GM12878 (cell line): ENCODE measurements at regions of chr6 and their contacts with region 1.

Region 1: DNA sequence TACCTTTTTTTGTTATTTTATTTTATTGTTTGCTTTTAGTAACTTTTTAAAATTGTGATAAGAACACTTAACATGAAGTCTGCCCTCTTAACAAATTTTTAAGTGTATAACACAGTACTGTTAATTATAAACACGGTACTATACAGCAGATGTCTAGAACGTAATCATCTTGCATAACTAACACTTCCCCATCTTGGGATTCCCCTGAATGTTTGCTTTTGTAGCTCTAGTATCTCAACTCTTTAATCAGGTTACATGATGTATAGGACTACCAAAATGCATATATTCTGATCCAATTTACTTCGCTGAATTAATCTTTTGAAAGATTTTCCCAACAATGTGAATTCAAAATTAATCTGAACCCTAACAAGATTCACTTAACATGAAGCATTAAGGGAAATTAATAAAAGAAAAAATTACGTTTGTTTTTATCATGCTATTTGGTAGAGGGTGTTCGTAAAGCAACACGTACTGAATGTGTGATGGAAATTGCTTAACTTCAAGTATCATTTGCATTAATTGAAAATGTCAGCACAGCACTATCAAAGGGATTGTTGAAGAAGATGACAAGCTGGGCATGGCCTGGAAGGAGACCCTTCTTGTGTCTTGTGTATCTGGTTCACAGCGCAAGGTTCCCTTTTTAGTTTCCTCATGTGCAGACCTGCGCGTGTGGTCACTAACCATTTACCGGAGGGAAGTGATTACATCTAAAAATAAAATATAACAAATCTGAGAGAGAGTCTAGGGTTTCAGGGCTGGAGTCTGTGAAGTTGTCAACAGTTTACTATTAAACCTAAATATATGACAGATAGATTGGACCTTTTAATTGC is 15.2 kb downstream of the COL19A1 start:
- DNase-seq: peak; percentile 85
- ATAC-seq: peak; percentile 88
- H3K4me3 ChIP-seq: peak overlapping the region; percentile 48
- H3K27ac ChIP-seq: peak overlapping the region; percentile 96
- H3K4me1 ChIP-seq: peaks cover 24% of the 10 kb centered on the region
- H3K27me3 ChIP-seq: no peaks in the 10 kb centered on the region
- CTCF ChIP-seq: no peak
- EP300 ChIP-seq: peak; percentile 71 to 91; a peak in 3 of 4 replicates
- POLR2A ChIP-seq: peak; percentile 59
- RAD21 ChIP-seq: peak; percentile 20; the same call in 1 of the 2 replicates

Region 2: GRCh38 chr6:69894578-69895347 is 13.2 kb after region 1 on chr6:
- CTCF ChIA-PET with region 1: interaction called, 17 read pairs
- POLR2A ChIA-PET with region 1: interaction called, 23 read pairs
- RAD21 ChIA-PET with region 1: interaction called, 41 read pairs
- SMC1A ChIA-PET with region 1: interaction called, 27 read pairs
- in situ Hi-C with region 1: no loop called
- intact Hi-C with region 1: no loop called
- DNase-seq: peak; percentile 62
- ATAC-seq: peak; percentile 91
- H3K4me3 ChIP-seq: 0 out of 2 replicates have a peak overlapping the region, but pooled peaks have one; percentile 25
- H3K27ac ChIP-seq: peak overlapping the region; percentile 86
- H3K4me1 ChIP-seq: peaks cover 11% of the 10 kb centered on the region; the same call in 1 of the 2 replicates
- H3K27me3 ChIP-seq: no peaks in the 10 kb centered on the region
- CTCF ChIP-seq: no peak
- EP300 ChIP-seq: no peak
- POLR2A ChIP-seq: peak; percentile 41; the same call in 1 of the 2 replicates
- RAD21 ChIP-seq: no peak

Region 3: DNA sequence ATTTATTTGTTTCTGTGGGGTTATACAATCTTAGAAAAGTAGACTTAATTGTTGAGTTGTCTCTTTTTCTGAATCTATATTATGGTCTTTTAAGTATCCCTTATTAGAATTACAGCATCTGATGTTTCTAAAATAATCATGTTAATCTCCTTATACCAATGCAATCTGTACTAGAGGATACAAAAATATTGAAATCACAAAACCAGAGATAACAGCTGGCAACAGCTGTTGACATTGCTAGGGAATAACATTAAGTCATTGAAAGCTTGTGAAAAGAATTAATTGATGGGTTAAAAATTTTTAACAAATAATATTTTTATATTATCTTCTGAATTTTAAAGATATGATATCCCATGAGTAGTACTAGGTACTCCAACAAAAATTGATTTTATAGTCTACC is 147.4 kb after region 1 on chr6:
- CTCF ChIA-PET with region 1: no interaction called
- POLR2A ChIA-PET with region 1: no interaction called
- RAD21 ChIA-PET with region 1: no interaction called
- SMC1A ChIA-PET with region 1: no interaction called
- in situ Hi-C with region 1: no loop called
- intact Hi-C with region 1: no loop called
- DNase-seq: no peak
- ATAC-seq: no peak
- H3K4me3 ChIP-seq: no peak overlapping the region
- H3K27ac ChIP-seq: no peak overlapping the region
- H3K4me1 ChIP-seq: no peaks in the 10 kb centered on the region
- H3K27me3 ChIP-seq: no peaks in the 10 kb centered on the region
- CTCF ChIP-seq: no peak
- EP300 ChIP-seq: no peak
- POLR2A ChIP-seq: no peak
- RAD21 ChIP-seq: no peak

Region 4: GRCh38 chr6:70183538-70183937 is 302.0 kb after region 1 on chr6:
- CTCF ChIA-PET with region 1: no interaction called
- POLR2A ChIA-PET with region 1: no interaction called
- RAD21 ChIA-PET with region 1: no interaction called
- SMC1A ChIA-PET with region 1: no interaction called
- in situ Hi-C with region 1: no loop called
- intact Hi-C with region 1: no loop called
- DNase-seq: no peak
- ATAC-seq: no peak
- H3K4me3 ChIP-seq: no peak overlapping the region
- H3K27ac ChIP-seq: no peak overlapping the region
- H3K4me1 ChIP-seq: no peaks in the 10 kb centered on the region
- H3K27me3 ChIP-seq: no peaks in the 10 kb centered on the region
- CTCF ChIP-seq: no peak
- EP300 ChIP-seq: no peak
- POLR2A ChIP-seq: no peak
- RAD21 ChIP-seq: no peak